Activated CD8-positive, alpha-beta T cell treated with anti-CD3 and anti-CD28 coated beads, Interleukin-2, amount 10 ng/mL, durations not matched to agents 7 days and 5 days (primary cell): ENCODE measurements at regions of chr2 and their contacts with region 1.

Region 1: GRCh38 chr2:95022309-95023221 is 2.9 kb upstream of the MAL start:
- DNase-seq: peak; percentile 92
- ATAC-seq: peak; percentile 55
- H3K4me3 Mint-ChIP-seq: peak overlapping the region; percentile 81
- H3K27ac Mint-ChIP-seq: peak overlapping the region; percentile 82
- H3K4me1 Mint-ChIP-seq: peaks cover 58% of the 10 kb centered on the region
- H3K27me3 Mint-ChIP-seq: no peaks in the 10 kb centered on the region

Region 2: GRCh38 chr2:94986392-94986963 is 36.1 kb before region 1 on chr2:
- CTCF ChIA-PET with region 1: interaction called, 16 read pairs
- POLR2A ChIA-PET with region 1: no interaction called
- DNase-seq: peak; percentile 67
- ATAC-seq: peak; percentile 79
- H3K4me3 Mint-ChIP-seq: no peak overlapping the region
- H3K27ac Mint-ChIP-seq: no peak overlapping the region
- H3K4me1 Mint-ChIP-seq: peaks cover 6% of the 10 kb centered on the region
- H3K27me3 Mint-ChIP-seq: peaks cover 10% of the 10 kb centered on the region

Region 3: GRCh38 chr2:95053543-95053942 is 31.0 kb after region 1 on chr2:
- CTCF ChIA-PET with region 1: interaction called, 100 read pairs
- POLR2A ChIA-PET with region 1: interaction called, 9 read pairs
- DNase-seq: no peak
- ATAC-seq: no peak
- H3K4me3 Mint-ChIP-seq: no peak overlapping the region
- H3K27ac Mint-ChIP-seq: peak overlapping the region; percentile 61
- H3K4me1 Mint-ChIP-seq: peaks cover 78% of the 10 kb centered on the region
- H3K27me3 Mint-ChIP-seq: no peaks in the 10 kb centered on the region

Region 4: DNA sequence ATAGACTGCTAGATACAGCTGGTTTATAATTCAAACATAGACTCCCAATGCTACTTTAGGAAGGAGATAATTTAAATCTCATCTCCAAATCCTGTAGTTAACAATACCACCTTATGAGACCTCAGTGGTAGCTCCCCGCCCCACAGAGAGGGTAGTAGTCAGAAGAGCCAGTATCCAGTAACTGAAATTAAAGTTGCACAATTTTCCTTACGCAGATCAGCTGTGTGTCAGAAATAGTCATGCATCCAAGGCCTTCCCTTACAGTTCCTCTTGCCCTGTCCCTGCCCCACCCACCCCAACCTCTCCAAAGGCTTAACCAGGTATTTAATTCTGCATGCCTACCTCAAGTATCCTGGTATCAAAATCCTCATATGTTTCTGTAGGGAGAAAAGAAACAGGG is 83.5 kb after region 1 on chr2:
- CTCF ChIA-PET with region 1: interaction called, 13 read pairs
- POLR2A ChIA-PET with region 1: no interaction called
- DNase-seq: no peak
- ATAC-seq: no peak
- H3K4me3 Mint-ChIP-seq: no peak overlapping the region
- H3K27ac Mint-ChIP-seq: no peak overlapping the region
- H3K4me1 Mint-ChIP-seq: no peaks in the 10 kb centered on the region
- H3K27me3 Mint-ChIP-seq: no peaks in the 10 kb centered on the region

Region 5: DNA sequence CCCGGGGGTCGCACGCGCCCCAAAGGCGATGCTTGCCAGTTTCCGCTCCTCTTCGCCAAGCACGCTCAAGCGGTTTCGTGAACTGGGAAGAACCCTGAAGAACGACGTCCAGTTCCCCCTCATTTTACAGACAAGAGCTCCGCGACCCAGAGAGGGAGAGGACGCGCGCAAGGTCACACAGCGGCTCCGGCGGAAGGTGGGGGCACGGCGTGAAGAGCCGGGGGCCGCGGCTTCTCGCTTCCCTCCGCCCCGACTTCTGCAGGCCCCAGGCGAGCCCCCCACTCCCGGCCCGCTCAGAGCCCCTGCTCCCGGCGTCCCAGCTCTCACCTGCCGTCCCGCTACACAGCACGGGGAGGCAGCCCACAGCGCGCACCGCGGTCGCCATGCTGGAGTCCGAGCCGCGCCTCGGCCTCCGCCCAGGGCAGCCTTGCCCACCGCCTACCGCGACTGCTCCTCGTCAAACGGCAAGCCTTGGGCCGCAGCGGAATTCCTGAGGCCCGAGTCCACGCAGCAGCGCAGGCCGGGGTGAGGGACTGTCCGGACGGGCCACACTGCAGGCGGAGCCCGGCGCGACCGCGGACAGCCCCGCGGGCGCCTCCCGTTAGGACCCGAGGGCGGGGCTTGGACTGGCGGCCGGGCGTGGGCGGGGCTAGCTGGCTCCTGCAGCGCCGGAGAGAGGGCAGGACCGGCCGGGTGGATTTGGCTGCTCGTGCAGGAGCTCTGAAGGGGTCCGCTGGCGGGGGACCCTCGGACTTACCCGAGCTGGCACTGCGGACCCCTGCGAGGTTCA is 99.0 kb after region 1 on chr2 and contains the start of gene MRPS5:
- CTCF ChIA-PET with region 1: interaction called, 296 read pairs
- POLR2A ChIA-PET with region 1: interaction called, 16 read pairs
- DNase-seq: peak; percentile 87
- ATAC-seq: peak; percentile 97
- H3K4me3 Mint-ChIP-seq: peak within 1 kb of the TSS; percentile 96
- H3K27ac Mint-ChIP-seq: peak within 1 kb of the TSS; percentile 96
- H3K4me1 Mint-ChIP-seq: peaks cover 43% of the 10 kb centered on the region
- H3K27me3 Mint-ChIP-seq: peaks cover 3% of the 10 kb centered on the region
- total RNA-seq, gene MRPS5: 79.8 to 83.3 TPM

Region 6: DNA sequence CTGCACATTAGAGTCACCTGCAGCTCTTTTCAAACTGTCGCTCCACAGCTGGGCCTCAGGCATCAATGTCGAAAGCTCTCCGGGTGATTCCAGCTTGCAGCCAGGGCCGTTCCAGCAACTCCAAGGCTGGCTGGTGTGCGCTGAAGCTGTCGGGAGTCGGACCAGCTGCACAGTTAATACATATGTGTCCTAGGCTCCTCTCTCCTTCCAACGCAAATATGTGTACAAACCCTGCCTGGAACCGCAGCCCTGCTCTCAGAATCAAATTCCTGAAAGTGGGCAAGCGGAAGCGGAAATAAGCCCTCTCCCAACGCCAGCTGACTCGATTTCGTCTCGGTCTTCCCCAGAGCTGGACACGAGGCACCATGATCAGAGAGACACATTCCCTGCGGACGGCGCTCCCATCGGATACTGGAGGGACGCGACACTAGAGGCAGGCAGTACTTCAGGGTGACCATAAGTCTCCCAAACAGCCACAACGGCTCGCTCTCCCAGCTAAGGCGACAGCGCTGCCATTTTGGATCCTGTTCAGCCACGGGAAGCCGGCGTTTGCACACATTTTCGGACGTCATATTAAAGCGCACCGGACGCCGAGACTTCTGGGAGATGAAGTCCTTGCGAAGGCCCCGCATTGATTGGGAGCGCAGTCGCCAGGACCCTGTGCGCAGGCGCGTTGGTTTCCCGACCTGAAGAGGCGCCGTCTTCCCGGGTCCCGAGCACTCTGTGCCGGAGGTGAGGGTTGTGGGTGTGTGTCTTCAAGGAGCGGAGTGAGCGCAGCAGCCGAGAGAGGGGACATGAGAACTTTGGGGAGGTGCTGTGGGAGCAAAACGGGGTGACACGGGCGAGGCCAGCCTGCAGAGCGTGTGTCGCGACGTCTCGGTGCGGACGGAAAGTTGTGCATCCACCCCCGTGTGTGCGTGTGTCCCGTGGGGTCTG is 142.8 kb after region 1 on chr2 and contains the start of gene ZNF2:
- CTCF ChIA-PET with region 1: interaction called, 16 read pairs
- POLR2A ChIA-PET with region 1: no interaction called
- DNase-seq: peak; percentile 98
- ATAC-seq: peak; percentile 98
- H3K4me3 Mint-ChIP-seq: peak within 1 kb of the TSS; percentile 93
- H3K27ac Mint-ChIP-seq: peak within 1 kb of the TSS; percentile 96
- H3K4me1 Mint-ChIP-seq: peaks cover 28% of the 10 kb centered on the region
- H3K27me3 Mint-ChIP-seq: no peaks in the 10 kb centered on the region
- total RNA-seq, gene ZNF2: 4.5 to 5.0 TPM